Dendritic cell treated with granulocyte-macrophage colony-stimulating factor and Interleukin-4, amounts not matched to agents 40 ng/mL and 50 ng/mL, for 4 days (primary cell): ENCODE measurements at regions of chr5 and their contacts with region 1.

Region 1: GRCh38 chr5:79464695-79465332 is 49.1 kb downstream of the HOMER1 start:
- H3K4me3 Mint-ChIP-seq: no peak overlapping the region
- H3K27ac Mint-ChIP-seq: no peak overlapping the region
- H3K4me1 Mint-ChIP-seq: no peaks in the 10 kb centered on the region
- H3K27me3 Mint-ChIP-seq: peaks cover 6% of the 10 kb centered on the region

Region 2: GRCh38 chr5:79133657-79134451 is 331.0 kb before region 1 on chr5:
- intact Hi-C with region 1: loop called (anchors 5 kb)
- H3K4me3 Mint-ChIP-seq: no peak overlapping the region
- H3K27ac Mint-ChIP-seq: no peak overlapping the region
- H3K4me1 Mint-ChIP-seq: peaks cover 11% of the 10 kb centered on the region
- H3K27me3 Mint-ChIP-seq: peaks cover 3% of the 10 kb centered on the region

Region 3: DNA sequence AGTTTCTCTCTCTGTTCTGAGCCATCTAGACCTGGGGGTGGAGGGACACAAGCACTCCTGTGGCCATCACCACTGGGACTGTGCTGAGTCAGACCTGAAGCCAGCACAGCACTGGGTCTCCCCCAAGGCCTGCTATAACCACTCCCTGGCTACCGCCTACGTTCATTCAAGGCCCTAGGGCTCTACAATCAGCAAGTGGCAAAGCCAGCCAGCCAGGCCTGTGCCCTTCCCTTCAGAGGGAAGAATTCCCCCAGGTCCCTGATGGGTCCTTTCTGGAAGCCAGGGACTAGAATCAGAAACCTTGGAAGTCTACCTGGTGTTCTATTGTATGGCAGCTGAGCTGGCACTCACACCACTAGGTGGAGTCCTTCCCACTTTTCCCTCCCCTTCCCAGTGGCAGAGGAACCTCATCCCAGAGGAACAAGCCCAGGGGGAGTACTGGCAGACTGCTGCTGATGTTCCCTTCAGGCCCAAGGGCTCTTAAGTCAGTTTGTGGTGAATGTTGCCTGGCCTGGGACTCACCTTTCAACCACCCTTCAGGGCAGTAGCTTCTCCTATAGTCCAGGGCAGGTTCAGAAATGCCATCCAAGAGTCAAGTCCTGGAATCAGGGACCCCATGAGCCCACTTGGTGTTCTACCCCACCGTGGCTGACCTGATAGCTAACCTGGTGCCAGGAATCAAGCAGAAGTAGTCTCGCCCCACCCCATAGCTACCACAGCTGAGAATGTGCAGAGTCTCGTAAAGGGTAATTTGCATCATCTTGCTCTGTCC is 208.8 kb before region 1 on chr5:
- intact Hi-C with region 1: loop called (anchors 5 kb)
- H3K4me3 Mint-ChIP-seq: no peak overlapping the region
- H3K27ac Mint-ChIP-seq: no peak overlapping the region
- H3K4me1 Mint-ChIP-seq: no peaks in the 10 kb centered on the region
- H3K27me3 Mint-ChIP-seq: no peaks in the 10 kb centered on the region